Activated B cell treated with CpG ODN at 0.5 μM for 24 hours (primary cell): ENCODE measurements at regions of chr11 and their contacts with region 1.

Region 1: DNA sequence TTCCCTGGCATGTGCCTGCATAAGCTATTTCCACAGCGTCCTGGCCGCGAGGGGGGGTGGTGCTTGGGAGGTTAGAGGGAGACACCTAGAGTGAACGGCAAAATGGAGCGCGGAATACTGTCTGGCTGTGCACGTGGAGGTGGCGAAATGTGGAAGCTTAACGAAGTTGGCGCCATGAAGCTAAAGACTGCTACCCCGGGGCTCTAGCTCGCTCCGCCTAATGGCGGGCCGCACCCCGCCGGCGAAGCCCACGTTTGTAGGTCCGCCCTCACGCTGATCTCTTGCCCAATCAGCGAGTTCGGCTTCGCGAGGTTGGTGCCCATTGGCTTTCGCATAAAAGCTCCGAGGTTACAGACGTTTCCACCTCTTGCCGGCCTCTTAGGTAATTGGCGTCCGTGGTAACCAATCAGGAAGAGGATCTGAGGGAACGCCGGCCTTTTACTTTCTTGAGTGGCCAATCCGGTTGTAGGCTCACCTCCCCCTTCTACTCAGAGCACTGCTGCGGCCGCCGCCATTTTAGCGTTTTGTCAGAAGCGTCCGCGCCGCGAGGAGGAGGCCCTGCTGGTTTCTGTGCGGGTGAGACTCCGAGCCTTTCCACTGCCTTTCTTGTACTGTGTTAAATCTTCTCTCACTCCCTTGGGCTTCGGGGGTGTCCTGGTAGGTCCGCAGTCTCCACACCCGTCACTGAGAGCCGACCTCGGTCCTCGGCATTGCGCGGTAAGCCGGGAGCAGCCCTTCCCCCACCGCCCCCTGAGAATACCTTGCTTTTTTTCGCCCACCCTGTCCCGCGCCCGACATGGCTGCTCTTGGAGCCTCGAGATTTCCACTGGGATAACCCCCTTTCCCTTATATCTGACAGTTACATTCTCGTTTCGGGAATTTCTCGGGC is at the start of gene RBM4:
- DNase-seq: peak; percentile 78
- ATAC-seq: peak; percentile 95
- H3K4me3 Mint-ChIP-seq: peak within 1 kb of the TSS; percentile 99
- H3K27ac Mint-ChIP-seq: peak within 1 kb of the TSS; percentile 98
- H3K4me1 Mint-ChIP-seq: peaks cover 67% of the 10 kb centered on the region
- H3K27me3 Mint-ChIP-seq: no peaks in the 10 kb centered on the region
- CTCF ChIP-seq: no peak
- total RNA-seq, gene RBM4: 197 and 202 TPM in 2 replicates

Region 2: DNA sequence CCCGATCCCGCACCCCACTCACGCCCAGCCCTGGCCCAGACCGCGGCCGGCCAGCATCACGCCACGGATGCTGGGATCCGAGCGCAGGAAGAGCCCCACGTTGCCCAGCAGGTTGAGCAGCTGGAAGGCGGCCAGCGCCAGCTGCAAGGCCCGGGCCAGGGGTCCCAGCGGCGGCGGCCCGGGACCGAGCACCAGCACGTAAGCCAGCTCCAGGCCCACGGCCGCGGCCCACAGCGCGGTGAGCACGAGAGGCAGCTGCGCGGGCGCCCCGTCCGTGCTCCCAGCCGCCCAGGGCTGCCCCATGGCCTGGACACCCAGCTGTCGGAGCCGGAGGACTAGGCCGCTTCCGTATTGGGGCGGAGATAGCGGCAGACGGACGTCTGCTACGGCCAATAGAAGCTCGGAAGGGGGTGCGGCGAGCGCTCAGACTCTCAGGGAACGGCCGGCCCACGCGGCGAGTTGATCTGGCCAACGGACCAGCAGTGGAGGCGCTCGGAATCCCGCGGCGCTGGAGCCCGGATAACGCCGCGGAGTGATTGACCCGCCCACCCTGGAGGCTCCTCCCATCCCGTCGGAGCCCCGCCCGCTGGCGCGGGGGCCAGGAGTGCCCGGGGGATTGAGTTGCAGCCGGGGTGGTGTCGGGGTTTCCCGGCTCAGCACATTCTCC is 92.6 kb before region 1 on chr11 and contains the start of gene ZDHHC24:
- CTCF ChIA-PET with region 1: interaction called, 3 read pairs
- POLR2A ChIA-PET with region 1: interaction called, 17 read pairs
- intact Hi-C with region 1: loop called (anchors 1 kb)
- DNase-seq: peak; percentile 86
- ATAC-seq: peak; percentile 85
- H3K4me3 Mint-ChIP-seq: peak within 1 kb of the TSS; percentile 77
- H3K27ac Mint-ChIP-seq: peak within 1 kb of the TSS; percentile 57
- H3K4me1 Mint-ChIP-seq: peaks cover 35% of the 10 kb centered on the region
- H3K27me3 Mint-ChIP-seq: no peaks in the 10 kb centered on the region
- CTCF ChIP-seq: no peak
- total RNA-seq, gene ZDHHC24: 14.6 and 19.0 TPM in 2 replicates

Region 3: GRCh38 chr11:66592457-66593302 is 45.7 kb before region 1 on chr11 and contains the starts of genes CCDC87 and CCS:
- CTCF ChIA-PET with region 1: interaction called, 4 read pairs
- POLR2A ChIA-PET with region 1: interaction called, 52 read pairs
- intact Hi-C with region 1: loop called (anchors 1 kb)
- DNase-seq: peak; percentile 98
- ATAC-seq: peak; percentile 97
- H3K4me3 Mint-ChIP-seq: peak within 1 kb of the TSS; percentile 100
- H3K27ac Mint-ChIP-seq: peak within 1 kb of the TSS; percentile 99
- H3K4me1 Mint-ChIP-seq: peaks cover 36% of the 10 kb centered on the region
- H3K27me3 Mint-ChIP-seq: no peaks in the 10 kb centered on the region
- CTCF ChIP-seq: no peak
- total RNA-seq, gene CCDC87: 0.22 and 0.31 TPM in 2 replicates
- total RNA-seq, gene CCS: 59.0 and 65.3 TPM in 2 replicates

Region 4: GRCh38 chr11:66616379-66617154 is 21.9 kb before region 1 on chr11 and contains the start of gene RBM14:
- CTCF ChIA-PET with region 1: interaction called, 14 read pairs
- POLR2A ChIA-PET with region 1: interaction called, 272 read pairs
- intact Hi-C with region 1: loop called (anchors 1 kb)
- DNase-seq: peak; percentile 97
- ATAC-seq: peak; percentile 88
- H3K4me3 Mint-ChIP-seq: peak within 1 kb of the TSS; percentile 98
- H3K27ac Mint-ChIP-seq: peak within 1 kb of the TSS; percentile 99
- H3K4me1 Mint-ChIP-seq: peaks cover 63% of the 10 kb centered on the region
- H3K27me3 Mint-ChIP-seq: no peaks in the 10 kb centered on the region
- CTCF ChIP-seq: no peak
- total RNA-seq, gene RBM14: 147 and 160 TPM in 2 replicates

Region 5: DNA sequence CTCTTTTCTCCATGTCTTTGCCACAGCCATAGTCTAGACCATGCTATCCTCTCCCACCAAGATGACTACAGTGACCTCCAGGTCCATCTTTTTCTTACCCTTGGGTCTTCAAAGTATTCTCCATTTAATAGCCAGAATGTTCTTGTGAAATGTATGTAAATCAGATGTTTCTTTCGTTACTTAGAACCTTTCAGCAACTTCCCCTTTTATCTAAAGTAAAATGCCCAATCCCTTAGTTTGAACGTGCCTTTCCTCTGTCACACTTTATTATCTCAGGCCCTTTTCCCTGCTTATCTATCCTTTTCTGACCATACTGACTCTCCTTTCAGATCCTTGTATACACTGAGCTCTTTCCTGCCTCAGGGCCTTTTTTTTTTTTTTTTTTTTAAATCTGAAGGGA is 21.3 kb after region 1 on chr11:
- CTCF ChIA-PET with region 1: interaction called, 3 read pairs
- POLR2A ChIA-PET with region 1: interaction called, 22 read pairs
- intact Hi-C with region 1: loop called (anchors 2 kb)
- DNase-seq: no peak
- ATAC-seq: peak; percentile 57
- H3K4me3 Mint-ChIP-seq: peak overlapping the region; percentile 55
- H3K27ac Mint-ChIP-seq: peak overlapping the region; percentile 74
- H3K4me1 Mint-ChIP-seq: peaks cover 39% of the 10 kb centered on the region
- H3K27me3 Mint-ChIP-seq: no peaks in the 10 kb centered on the region
- CTCF ChIP-seq: no peak

Region 6: GRCh38 chr11:66686801-66687750 is 48.7 kb after region 1 on chr11:
- CTCF ChIA-PET with region 1: no interaction called
- POLR2A ChIA-PET with region 1: no interaction called
- intact Hi-C with region 1: no loop called
- DNase-seq: no peak
- ATAC-seq: no peak
- H3K4me3 Mint-ChIP-seq: no peak overlapping the region
- H3K27ac Mint-ChIP-seq: no peak overlapping the region
- H3K4me1 Mint-ChIP-seq: no peaks in the 10 kb centered on the region
- H3K27me3 Mint-ChIP-seq: no peaks in the 10 kb centered on the region
- CTCF ChIP-seq: no peak

Region 7: GRCh38 chr11:66855574-66856495 is 217.4 kb after region 1 on chr11:
- CTCF ChIA-PET with region 1: no interaction called
- POLR2A ChIA-PET with region 1: interaction called, 10 read pairs
- intact Hi-C with region 1: no loop called
- DNase-seq: no peak
- ATAC-seq: peak; percentile 86
- H3K4me3 Mint-ChIP-seq: peak overlapping the region; percentile 86
- H3K27ac Mint-ChIP-seq: peak overlapping the region; percentile 76
- H3K4me1 Mint-ChIP-seq: peaks cover 16% of the 10 kb centered on the region
- H3K27me3 Mint-ChIP-seq: no peaks in the 10 kb centered on the region
- CTCF ChIP-seq: no peak